ENCODE measurements at regions of chr1 and their contacts with region 1.

Region 1: GRCh38 chr1:204516180-204516879 is at the start of gene MDM4:
- DNase-seq: peak; percentile 95
- H3K4me3 Mint-ChIP-seq: no peak within 1 kb of the TSS
- H3K27ac Mint-ChIP-seq: no peak within 1 kb of the TSS
- H3K4me1 Mint-ChIP-seq: peaks cover 64% of the 10 kb centered on the region
- H3K27me3 Mint-ChIP-seq: no peaks in the 10 kb centered on the region
- total RNA-seq, gene MDM4: 85.1 to 95.4 TPM

Region 2: DNA sequence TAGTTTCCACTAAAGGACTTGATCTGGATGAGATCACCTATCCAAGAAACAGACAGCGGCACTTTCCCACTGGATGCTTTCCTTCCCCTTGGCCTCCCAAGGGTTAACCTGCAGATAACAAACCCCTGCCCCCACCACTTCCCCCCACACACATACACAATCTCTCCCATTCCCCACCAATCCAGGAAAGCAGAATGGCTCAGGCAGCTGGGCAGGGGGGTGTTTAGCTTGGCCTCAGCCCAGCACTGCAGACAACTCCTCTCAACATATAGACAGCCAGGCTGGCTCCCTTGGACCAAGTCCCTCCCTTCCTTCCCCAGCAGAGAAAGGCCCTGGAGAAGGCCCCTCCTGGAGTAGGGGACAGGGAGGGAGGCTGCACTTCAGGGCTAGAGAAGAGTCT is 181.2 kb before region 1 on chr1:
- CTCF ChIA-PET with region 1: no interaction called
- POLR2A ChIA-PET with region 1: no interaction called
- DNase-seq: no peak
- H3K4me3 Mint-ChIP-seq: no peak overlapping the region
- H3K27ac Mint-ChIP-seq: no peak overlapping the region
- H3K4me1 Mint-ChIP-seq: no peaks in the 10 kb centered on the region
- H3K27me3 Mint-ChIP-seq: peaks cover 7% of the 10 kb centered on the region

Region 3: DNA sequence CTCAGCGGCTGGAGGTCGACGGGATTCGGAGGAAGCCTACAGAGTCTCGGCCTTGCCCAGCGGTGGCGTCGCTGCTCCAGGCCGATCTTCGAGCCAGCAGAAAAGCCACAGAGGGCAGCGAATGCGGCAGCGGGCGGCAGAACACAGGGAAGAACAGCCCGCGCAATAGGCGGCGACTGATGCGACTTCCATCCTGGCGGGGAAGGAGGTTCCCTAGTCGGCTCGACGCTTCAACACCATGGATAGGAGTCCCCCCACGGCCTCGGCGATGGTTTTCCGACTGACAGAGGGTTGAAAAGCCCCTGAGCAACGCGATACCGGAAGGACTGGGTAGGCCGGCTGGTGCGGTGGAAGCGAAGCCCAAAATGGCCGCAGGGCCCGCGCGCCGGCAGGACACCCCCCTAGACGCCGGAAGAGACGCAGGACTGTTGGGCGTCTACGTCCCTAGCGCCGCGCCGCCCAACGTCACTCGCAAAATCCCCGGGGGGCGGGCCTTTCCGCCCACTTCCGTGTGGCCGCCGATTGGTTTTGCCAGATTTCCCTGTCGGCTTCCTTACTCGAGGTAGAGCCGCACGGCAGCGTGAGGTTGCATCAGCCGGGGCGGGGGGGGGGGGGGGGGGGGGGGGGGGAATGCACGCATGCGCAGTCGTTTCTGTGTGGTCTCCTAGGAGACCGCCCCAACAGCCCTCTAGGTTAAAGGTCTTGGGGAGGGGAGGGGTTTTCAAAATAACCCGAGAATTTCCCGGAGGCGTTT is 104.7 kb before region 1 on chr1 and contains the start of gene PPP1R15B:
- CTCF ChIA-PET with region 1: interaction called, 3 read pairs
- POLR2A ChIA-PET with region 1: interaction called, 10 read pairs
- DNase-seq: peak; percentile 98
- H3K4me3 Mint-ChIP-seq: peak within 1 kb of the TSS; percentile 98
- H3K27ac Mint-ChIP-seq: peak within 1 kb of the TSS; percentile 98
- H3K4me1 Mint-ChIP-seq: peaks cover 19% of the 10 kb centered on the region
- H3K27me3 Mint-ChIP-seq: no peaks in the 10 kb centered on the region
- total RNA-seq, gene PPP1R15B: 76.0 to 76.1 TPM

Region 4: GRCh38 chr1:204530932-204531331 is 14.6 kb after region 1 on chr1:
- CTCF ChIA-PET with region 1: interaction called, 8 read pairs
- POLR2A ChIA-PET with region 1: interaction called, 50 read pairs
- DNase-seq: no peak
- H3K4me3 Mint-ChIP-seq: no peak overlapping the region
- H3K27ac Mint-ChIP-seq: no peak overlapping the region
- H3K4me1 Mint-ChIP-seq: no peaks in the 10 kb centered on the region
- H3K27me3 Mint-ChIP-seq: no peaks in the 10 kb centered on the region

Region 5: DNA sequence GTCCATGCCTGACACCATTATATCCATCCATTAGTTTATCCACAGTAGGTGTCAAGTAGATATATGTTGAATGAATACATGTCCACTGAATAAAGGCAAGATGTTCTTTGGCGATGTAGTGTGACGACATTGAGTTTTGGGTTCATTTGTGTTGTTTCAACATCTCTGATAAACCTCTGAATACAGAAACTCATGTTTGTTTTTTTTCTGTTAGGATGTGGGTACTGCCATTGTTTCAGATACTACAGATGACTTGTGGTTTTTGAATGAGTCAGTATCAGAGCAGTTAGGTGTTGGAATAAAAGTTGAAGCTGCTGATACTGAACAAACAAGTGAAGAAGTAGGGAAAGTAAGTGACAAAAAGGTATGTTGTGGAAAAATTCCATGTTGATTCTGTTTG is 28.0 kb after region 1 on chr1:
- CTCF ChIA-PET with region 1: interaction called, 12 read pairs
- POLR2A ChIA-PET with region 1: interaction called, 73 read pairs
- DNase-seq: no peak
- H3K4me3 Mint-ChIP-seq: peak overlapping the region; percentile 33
- H3K27ac Mint-ChIP-seq: peak overlapping the region; percentile 86
- H3K4me1 Mint-ChIP-seq: peaks cover 54% of the 10 kb centered on the region
- H3K27me3 Mint-ChIP-seq: no peaks in the 10 kb centered on the region

Region 6: GRCh38 chr1:204578867-204579664 is 62.7 kb after region 1 on chr1:
- CTCF ChIA-PET with region 1: interaction called, 3 read pairs
- POLR2A ChIA-PET with region 1: interaction called, 18 read pairs
- DNase-seq: peak; percentile 55
- H3K4me3 Mint-ChIP-seq: peak overlapping the region; percentile 74
- H3K27ac Mint-ChIP-seq: peak overlapping the region; percentile 88
- H3K4me1 Mint-ChIP-seq: peaks cover 27% of the 10 kb centered on the region
- H3K27me3 Mint-ChIP-seq: no peaks in the 10 kb centered on the region

Measured in activated CD4-positive, alpha-beta memory T cell treated with anti-CD3 and anti-CD28 coated beads, Interleukin-2, amount 10 ng/mL, durations not matched to agents 7 days and 5 days (primary cell).